Activated CD4-positive, alpha-beta memory T cell treated with anti-CD3 and anti-CD28 coated beads, Interleukin-2, amount 10 ng/mL, durations not matched to agents 7 days and 5 days (primary cell): ENCODE measurements at regions of chr3 and their contacts with region 1.

Region 1: DNA sequence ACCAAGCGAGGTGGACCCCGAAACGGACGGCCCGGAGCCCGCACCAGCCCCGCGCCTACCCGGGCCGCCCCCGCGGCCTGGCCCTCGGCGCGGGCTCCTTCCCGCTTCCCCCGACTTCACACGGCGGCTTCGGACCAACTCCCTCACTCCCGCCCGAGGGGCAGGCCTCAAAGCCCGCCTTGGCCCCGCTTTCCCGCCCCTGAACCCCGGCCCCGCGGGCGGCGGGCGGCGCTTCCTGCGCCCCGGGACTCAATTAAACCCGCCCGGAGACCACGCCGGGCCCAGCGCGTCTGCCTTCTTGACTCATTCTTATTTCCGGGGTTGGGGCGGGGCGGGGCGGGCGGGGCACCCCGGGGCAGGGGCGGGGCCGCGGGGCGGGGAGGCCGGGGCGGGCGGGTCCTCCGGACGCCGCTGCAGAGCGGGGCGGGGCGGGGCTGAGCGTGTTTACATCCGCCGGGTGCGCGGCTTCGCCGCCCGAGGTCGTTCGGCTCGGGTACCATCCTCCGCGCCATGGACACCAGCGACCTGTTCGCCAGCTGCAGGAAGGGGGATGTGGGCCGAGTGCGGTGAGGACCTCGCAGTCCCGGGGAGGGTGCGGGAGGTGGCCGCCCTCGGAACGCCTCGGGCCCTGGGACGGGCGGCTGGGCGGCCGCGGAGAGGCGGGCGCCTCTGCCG is at the start of gene ABTB1:
- DNase-seq: peak; percentile 89
- H3K4me3 Mint-ChIP-seq: peak within 1 kb of the TSS; percentile 88
- H3K27ac Mint-ChIP-seq: peak within 1 kb of the TSS; percentile 94
- H3K4me1 Mint-ChIP-seq: peaks cover 30% of the 10 kb centered on the region
- H3K27me3 Mint-ChIP-seq: no peaks in the 10 kb centered on the region
- total RNA-seq, gene ABTB1: 34.3 to 38.8 TPM

Region 2: GRCh38 chr3:127598841-127599570 is 73.6 kb before region 1 on chr3:
- CTCF ChIA-PET with region 1: no interaction called
- POLR2A ChIA-PET with region 1: interaction called, 43 read pairs
- DNase-seq: no peak
- H3K4me3 Mint-ChIP-seq: peak overlapping the region; percentile 89
- H3K27ac Mint-ChIP-seq: peak overlapping the region; percentile 85
- H3K4me1 Mint-ChIP-seq: peaks cover 53% of the 10 kb centered on the region
- H3K27me3 Mint-ChIP-seq: no peaks in the 10 kb centered on the region

Region 3: DNA sequence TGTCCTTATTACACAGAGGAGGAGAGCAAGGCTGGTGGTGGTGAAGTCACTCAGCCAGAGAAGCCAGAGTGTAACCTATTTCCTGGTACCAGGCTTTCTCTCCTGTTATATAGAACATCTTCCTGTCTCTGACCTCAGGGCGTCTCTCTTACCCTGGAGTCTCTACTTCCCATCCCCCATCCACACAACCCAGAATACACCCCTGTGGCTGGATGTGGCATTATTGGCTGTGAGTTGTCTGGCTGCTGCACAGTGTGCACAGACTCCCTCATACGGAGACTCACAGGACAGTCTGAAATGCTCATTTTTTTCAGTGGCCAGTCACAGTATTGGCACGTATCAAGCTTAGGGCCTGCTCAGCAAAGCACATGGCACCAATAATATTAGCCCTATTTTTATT is 35.1 kb before region 1 on chr3:
- CTCF ChIA-PET with region 1: no interaction called
- POLR2A ChIA-PET with region 1: interaction called, 11 read pairs
- DNase-seq: peak; percentile 76
- H3K4me3 Mint-ChIP-seq: no peak overlapping the region
- H3K27ac Mint-ChIP-seq: peak overlapping the region; percentile 53
- H3K4me1 Mint-ChIP-seq: peaks cover 21% of the 10 kb centered on the region
- H3K27me3 Mint-ChIP-seq: peaks cover 4% of the 10 kb centered on the region

Region 4: GRCh38 chr3:127662001-127662469 is 10.6 kb before region 1 on chr3:
- CTCF ChIA-PET with region 1: no interaction called
- POLR2A ChIA-PET with region 1: interaction called, 16 read pairs
- DNase-seq: peak; percentile 3
- H3K4me3 Mint-ChIP-seq: no peak overlapping the region
- H3K27ac Mint-ChIP-seq: no peak overlapping the region
- H3K4me1 Mint-ChIP-seq: no peaks in the 10 kb centered on the region
- H3K27me3 Mint-ChIP-seq: peaks cover 4% of the 10 kb centered on the region